Adrenal gland (tissue), 19 donors: ENCODE measurements at regions of chrX and their contacts with region 1.

Region 1: DNA sequence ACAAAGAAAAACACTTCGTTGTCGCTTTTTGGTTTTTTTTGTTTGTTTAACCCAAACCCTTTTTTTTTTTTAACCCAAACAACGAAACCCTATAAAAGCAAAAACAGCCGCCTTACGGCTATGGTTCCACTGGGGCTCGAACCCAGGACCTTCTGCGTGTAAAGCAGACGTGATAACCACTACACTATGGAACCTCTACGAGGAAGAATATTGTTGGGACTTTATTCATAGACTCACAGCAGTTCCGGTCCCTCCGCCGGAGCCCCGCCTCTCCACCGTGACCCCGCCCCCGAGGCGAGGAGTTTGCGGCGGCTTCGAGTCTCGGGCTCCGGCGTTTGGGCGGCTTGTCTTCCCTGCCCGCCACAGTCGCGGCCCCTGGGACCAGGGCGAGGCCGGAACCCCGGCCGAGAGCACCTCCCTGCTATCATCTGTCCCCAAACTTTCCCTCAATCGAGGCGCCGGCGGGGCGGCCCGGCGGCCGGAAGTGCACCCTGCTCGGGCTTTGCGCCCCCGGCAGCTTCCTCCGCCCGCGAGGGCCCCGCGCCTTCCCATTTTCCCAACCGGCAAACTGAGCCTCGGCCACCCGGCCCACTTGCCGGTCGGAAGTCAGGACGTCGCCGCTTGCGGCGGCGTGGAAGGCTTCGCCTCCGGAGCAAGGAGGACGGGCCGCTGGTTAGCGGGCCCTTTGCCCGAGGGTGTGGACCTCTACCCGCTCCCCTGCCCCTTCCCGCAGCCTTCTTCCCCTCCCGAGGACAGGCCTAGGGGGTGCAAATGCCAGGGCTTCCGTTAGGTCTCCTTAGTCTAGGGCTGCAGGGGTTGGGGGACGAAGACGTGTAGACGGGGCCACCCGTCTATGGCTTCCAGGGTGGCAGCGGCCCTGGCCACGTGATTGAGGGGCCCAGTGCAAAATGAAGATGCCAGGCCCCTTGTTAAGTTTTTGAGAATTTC is 3.2 kb upstream of the RS1 start:
- DNase-seq: peak; percentile 61 to 81 (median 69)
- H3K4me3 ChIP-seq: peak overlapping the region in 3 of 4 donors; percentile 8 to 69 (median 32)
- H3K27ac ChIP-seq: peak overlapping the region in 4 of 5 donors; percentile 46 to 85 (median 70)
- H3K4me1 ChIP-seq: no peaks in the 10 kb centered on the region
- H3K27me3 ChIP-seq: no peaks in the 10 kb centered on the region
- CTCF ChIP-seq: no peak
- POLR2A ChIP-seq: peak in 1 of 2 donors; percentile 29

Region 2: DNA sequence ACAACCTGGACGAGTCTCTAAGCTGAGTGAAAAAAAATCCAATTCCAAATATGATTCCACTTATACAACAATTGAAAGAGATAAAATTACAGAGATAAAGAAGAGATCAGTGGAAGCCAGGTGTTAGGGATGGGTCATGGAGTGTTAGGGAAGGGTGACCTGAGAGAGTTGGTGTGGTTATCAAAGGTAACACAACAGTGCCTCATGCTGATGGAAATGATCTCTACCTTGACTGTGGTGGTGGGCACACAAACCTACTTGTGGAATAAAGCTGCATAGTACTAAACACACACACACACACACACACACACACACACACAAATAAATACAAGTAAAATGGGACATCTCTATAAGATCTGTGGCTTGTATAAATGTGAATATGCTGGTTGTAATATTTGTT is 480.4 kb before region 1 on chrX:
- intact Hi-C with region 1: no loop called
- DNase-seq: no peak
- H3K4me3 ChIP-seq: no peak overlapping the region
- H3K27ac ChIP-seq: no peak overlapping the region
- H3K4me1 ChIP-seq: no peaks in the 10 kb centered on the region
- H3K27me3 ChIP-seq: peaks cover 4% of the 10 kb centered on the region
- CTCF ChIP-seq: no peak
- POLR2A ChIP-seq: no peak

Region 3: DNA sequence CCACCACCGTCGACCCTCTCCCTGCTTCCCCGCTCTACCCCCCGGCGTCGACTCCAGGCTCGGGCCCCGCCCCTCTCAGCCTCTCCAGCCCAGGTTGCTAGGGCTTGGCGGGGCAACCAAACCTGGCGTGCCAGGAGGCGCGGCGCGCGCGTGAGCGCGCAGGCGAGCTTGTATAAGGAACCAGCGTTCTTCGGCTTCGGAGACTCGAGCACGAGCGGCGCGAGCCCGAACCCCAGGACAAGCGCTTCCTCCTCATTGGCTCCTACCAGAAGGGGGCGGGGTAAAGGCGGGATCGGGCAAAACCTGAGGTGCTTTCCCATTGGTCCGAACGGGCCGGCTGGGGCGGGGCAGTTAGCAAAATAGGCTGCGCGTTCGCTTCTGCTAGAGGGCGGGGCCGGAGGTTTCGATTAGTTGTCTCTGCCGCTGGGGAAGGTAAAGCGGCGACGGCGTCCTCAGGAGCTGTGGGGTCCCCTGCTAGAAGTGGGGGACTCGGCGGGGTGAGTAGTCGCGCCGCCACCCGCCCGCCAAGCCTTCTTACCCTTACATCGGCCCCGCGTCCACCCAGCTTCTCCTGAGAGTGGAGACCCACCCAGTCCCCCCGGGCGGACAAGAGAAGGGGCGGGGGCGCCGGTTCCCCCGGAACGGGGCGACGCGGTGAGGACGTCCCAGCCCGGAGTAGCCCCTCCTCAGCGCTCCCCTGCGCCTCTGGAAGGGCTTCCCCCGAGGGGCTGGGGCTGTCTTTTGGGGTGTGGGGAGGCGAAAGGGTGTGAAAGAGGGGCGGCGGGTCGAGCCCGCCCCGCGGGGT is 249.7 kb before region 1 on chrX and contains the start of gene CDKL5:
- intact Hi-C with region 1: loop called in 1 of 2 experiments (anchors 10 kb)
- DNase-seq: peak; percentile 96 to 99 (median 98)
- H3K4me3 ChIP-seq: peak within 1 kb of the TSS in 3 of 4 donors; percentile 32 to 83 (median 52)
- H3K27ac ChIP-seq: peak within 1 kb of the TSS in 4 of 5 donors; percentile 51 to 84 (median 60)
- H3K4me1 ChIP-seq: no peaks in the 10 kb centered on the region
- H3K27me3 ChIP-seq: no peaks in the 10 kb centered on the region
- CTCF ChIP-seq: no peak
- POLR2A ChIP-seq: peak; percentile 25 to 89
- total RNA-seq, gene CDKL5: 3.8 to 13.8 (median 7.8) TPM